A549 (cell line): ENCODE measurements at regions of chr12 and their contacts with region 1.

Region 1: GRCh38 chr12:107236824-107237511 is 143.6 kb upstream of the CRY1 start:
- DNase-seq: no peak
- ATAC-seq: no peak
- H3K4me3 ChIP-seq: no peak overlapping the region
- H3K27ac ChIP-seq: no peak overlapping the region
- H3K4me1 ChIP-seq: peaks cover 8% of the 10 kb centered on the region
- CTCF ChIP-seq: no peak
- EP300 ChIP-seq: no peak
- POLR2A ChIP-seq: no peak
- RAD21 ChIP-seq: no peak

Region 2: DNA sequence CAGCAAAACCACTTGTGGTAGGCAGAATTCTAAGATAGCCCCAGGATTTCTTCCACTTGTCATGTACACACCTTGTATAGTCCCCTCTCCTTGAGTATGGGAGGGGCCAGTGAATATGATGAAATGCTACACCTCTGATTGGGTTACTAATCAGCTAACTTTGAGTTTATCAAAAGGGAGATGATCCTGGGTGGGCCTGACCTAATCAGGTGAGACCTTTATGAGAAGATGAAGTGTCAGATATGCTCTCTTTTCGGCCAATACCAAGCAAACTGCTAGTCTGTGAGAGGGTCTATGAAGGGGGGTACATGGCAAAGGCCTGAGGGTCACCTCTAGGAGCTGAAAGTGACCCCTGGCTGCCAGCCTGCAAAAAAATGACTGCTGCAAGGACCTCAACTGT is 10.7 kb after region 1 on chr12:
- CTCF ChIA-PET with region 1: interaction called, 11 read pairs
- POLR2A ChIA-PET with region 1: no interaction called
- DNase-seq: no peak
- ATAC-seq: no peak
- H3K4me3 ChIP-seq: no peak overlapping the region
- H3K27ac ChIP-seq: no peak overlapping the region
- H3K4me1 ChIP-seq: no peaks in the 10 kb centered on the region
- CTCF ChIP-seq: no peak
- EP300 ChIP-seq: no peak
- POLR2A ChIP-seq: no peak
- RAD21 ChIP-seq: no peak